IMR-90 (cell line): ENCODE measurements at regions of chr6 and their contacts with region 1.

Region 1: GRCh38 chr6:126657561-126658175 is 317.8 kb downstream of the CENPW start:
- DNase-seq: peak; percentile 44
- ATAC-seq: peak; percentile 62; the same call in 1 of the 2 replicates
- H3K4me3 ChIP-seq: no peak overlapping the region
- H3K27ac ChIP-seq: no peak overlapping the region
- H3K4me1 ChIP-seq: no peaks in the 10 kb centered on the region; the same call in 1 of the 2 replicates
- H3K27me3 ChIP-seq: no peaks in the 10 kb centered on the region
- CTCF ChIP-seq: peak; percentile 47
- POLR2A ChIP-seq: no peak
- RAD21 ChIP-seq: peak; percentile 51

Region 2: DNA sequence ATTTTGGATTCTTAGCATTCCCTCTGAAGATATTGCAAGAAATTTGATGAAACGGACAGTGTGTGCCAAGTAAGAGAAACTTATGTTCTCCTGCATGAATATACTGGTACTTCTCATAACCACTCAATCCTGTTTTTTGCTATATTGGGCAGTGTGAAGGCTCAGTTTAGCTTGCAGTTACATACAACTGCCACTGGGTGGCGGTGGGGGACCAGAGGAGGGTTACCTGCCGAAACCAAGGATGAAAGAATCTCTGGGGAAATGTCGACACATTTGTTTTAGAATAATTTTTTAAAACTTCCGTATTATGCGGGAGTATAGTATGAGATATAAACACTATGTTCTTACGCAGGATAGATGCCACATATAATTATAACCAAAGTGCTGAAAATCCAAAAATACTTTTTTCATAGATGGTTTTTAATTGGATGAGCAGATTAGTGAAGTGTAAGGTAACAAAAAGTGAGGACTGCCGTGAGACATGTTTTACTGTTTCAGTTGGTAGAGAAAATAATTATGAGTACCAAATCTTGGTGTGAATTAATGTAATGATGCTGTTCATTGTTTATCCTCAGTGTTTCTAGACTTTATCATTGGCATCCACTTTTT is 661.6 kb before region 1 on chr6:
- CTCF ChIA-PET with region 1: no interaction called
- POLR2A ChIA-PET with region 1: no interaction called
- dilution Hi-C with region 1: no loop called
- in situ Hi-C with region 1: loop called (anchors 25 kb)
- intact Hi-C with region 1: loop called (anchors 2 kb)
- DNase-seq: peak; percentile 60
- ATAC-seq: peak; percentile 98
- H3K4me3 ChIP-seq: no peak overlapping the region
- H3K27ac ChIP-seq: no peak overlapping the region
- H3K4me1 ChIP-seq: no peaks in the 10 kb centered on the region
- H3K27me3 ChIP-seq: no peaks in the 10 kb centered on the region
- CTCF ChIP-seq: peak; percentile 94
- POLR2A ChIP-seq: no peak
- RAD21 ChIP-seq: peak; percentile 91

Region 3: DNA sequence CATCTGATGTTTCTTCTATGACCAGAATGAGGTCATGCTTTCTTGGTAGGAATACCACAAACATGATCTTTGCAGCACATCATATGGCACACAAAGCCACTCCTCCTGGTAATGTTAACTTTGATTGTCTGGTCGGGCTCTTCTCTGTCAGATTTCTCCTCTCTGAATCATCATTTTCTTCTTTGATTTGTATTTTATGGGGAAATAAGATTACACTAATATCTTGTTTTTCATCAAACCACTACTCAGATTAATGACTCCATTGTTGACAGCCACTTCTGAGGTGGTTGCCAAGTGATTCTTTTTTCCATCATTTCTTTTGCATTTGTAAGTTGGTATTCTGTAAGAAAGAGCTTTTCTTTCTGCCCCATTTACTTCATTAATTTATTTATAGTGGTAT is 641.8 kb before region 1 on chr6:
- CTCF ChIA-PET with region 1: no interaction called
- POLR2A ChIA-PET with region 1: no interaction called
- dilution Hi-C with region 1: no loop called
- in situ Hi-C with region 1: loop called (anchors 25 kb)
- intact Hi-C with region 1: no loop called
- DNase-seq: peak; percentile 16
- ATAC-seq: no peak
- H3K4me3 ChIP-seq: no peak overlapping the region
- H3K27ac ChIP-seq: no peak overlapping the region
- H3K4me1 ChIP-seq: no peaks in the 10 kb centered on the region; the same call in 1 of the 2 replicates
- H3K27me3 ChIP-seq: no peaks in the 10 kb centered on the region
- CTCF ChIP-seq: no peak
- POLR2A ChIP-seq: no peak
- RAD21 ChIP-seq: no peak

Region 4: GRCh38 chr6:126033696-126034095 is 624.0 kb before region 1 on chr6:
- CTCF ChIA-PET with region 1: no interaction called
- POLR2A ChIA-PET with region 1: no interaction called
- dilution Hi-C with region 1: no loop called
- in situ Hi-C with region 1: no loop called
- intact Hi-C with region 1: loop called (anchors 1 kb)
- DNase-seq: peak; percentile 91
- ATAC-seq: peak; percentile 96
- H3K4me3 ChIP-seq: no peak overlapping the region
- H3K27ac ChIP-seq: no peak overlapping the region
- H3K4me1 ChIP-seq: no peaks in the 10 kb centered on the region; the same call in 1 of the 2 replicates
- H3K27me3 ChIP-seq: no peaks in the 10 kb centered on the region
- CTCF ChIP-seq: peak; percentile 81
- POLR2A ChIP-seq: no peak
- RAD21 ChIP-seq: peak; percentile 80

Region 5: DNA sequence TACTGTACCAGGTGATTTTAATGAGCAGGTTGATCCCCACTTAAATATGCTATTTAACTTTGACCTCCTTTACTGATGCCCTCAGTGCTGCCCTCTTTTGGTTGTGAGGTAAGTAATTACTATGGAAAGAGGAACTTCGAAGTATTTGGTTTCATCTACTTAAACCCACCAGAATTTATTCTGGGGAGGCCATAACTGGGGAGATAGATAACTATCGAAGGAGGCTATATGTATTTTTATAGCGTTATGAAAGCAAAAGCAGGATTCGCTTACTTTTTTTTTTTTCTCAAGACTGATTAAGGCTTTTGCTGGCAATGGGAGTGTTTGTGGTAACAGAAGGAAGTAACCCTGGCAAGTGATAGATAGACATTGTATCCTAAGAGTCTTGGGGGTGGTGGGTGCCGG is 486.7 kb before region 1 on chr6:
- CTCF ChIA-PET with region 1: no interaction called
- POLR2A ChIA-PET with region 1: no interaction called
- dilution Hi-C with region 1: no loop called
- in situ Hi-C with region 1: no loop called
- intact Hi-C with region 1: loop called (anchors 5 kb)
- DNase-seq: peak; percentile 26
- ATAC-seq: 0 out of 2 replicates have a peak, but pooled peaks have one; percentile 35
- H3K4me3 ChIP-seq: no peak overlapping the region
- H3K27ac ChIP-seq: no peak overlapping the region
- H3K4me1 ChIP-seq: no peaks in the 10 kb centered on the region
- H3K27me3 ChIP-seq: peaks cover 12% of the 10 kb centered on the region
- CTCF ChIP-seq: peak; percentile 49
- POLR2A ChIP-seq: no peak
- RAD21 ChIP-seq: peak; percentile 38

Region 6: DNA sequence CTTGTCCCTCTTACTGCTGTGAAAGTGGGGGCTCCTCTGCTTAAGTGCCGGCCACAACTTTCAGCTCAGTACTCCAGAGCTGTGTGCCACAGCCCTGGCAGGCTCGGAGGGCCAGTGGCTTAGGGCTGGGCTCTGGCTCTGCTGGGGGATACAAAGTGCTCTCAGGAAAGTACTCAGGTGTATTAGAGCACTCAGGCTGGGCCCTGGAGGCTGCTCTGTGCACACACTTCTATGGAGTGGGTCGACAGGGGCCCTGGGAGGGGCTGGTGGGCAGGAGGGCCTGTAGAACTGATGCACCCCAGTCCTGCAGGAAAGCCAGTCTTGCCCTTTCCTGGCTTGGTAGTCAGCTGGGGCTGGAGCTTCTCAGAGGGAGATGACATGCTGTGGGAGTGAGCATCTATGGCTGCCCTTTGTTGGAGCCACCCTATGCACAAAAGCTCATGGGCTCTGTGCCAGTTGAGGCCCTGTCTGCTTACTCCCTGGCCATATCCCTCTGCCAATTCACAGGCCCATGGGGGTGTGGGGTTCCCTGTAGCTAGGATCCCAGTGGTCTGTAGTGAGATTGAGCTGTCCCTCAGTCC is 295.7 kb before region 1 on chr6:
- CTCF ChIA-PET with region 1: interaction called, 3 read pairs
- POLR2A ChIA-PET with region 1: no interaction called
- dilution Hi-C with region 1: no loop called
- in situ Hi-C with region 1: no loop called
- intact Hi-C with region 1: loop called (anchors 2 kb)
- DNase-seq: no peak
- ATAC-seq: no peak
- H3K4me3 ChIP-seq: no peak overlapping the region
- H3K27ac ChIP-seq: no peak overlapping the region
- H3K4me1 ChIP-seq: no peaks in the 10 kb centered on the region
- H3K27me3 ChIP-seq: no peaks in the 10 kb centered on the region
- CTCF ChIP-seq: no peak
- POLR2A ChIP-seq: no peak
- RAD21 ChIP-seq: no peak

Region 7: GRCh38 chr6:127100510-127101140 is 443.0 kb after region 1 on chr6:
- CTCF ChIA-PET with region 1: no interaction called
- POLR2A ChIA-PET with region 1: no interaction called
- dilution Hi-C with region 1: no loop called
- in situ Hi-C with region 1: no loop called
- intact Hi-C with region 1: loop called (anchors 5 kb)
- DNase-seq: peak; percentile 41
- ATAC-seq: peak; percentile 56; the same call in 1 of the 2 replicates
- H3K4me3 ChIP-seq: no peak overlapping the region
- H3K27ac ChIP-seq: no peak overlapping the region
- H3K4me1 ChIP-seq: 0 out of 2 replicates have a peak, but pooled peaks cover 4% of the 10 kb centered on the region
- H3K27me3 ChIP-seq: peaks cover 15% of the 10 kb centered on the region
- CTCF ChIP-seq: peak; percentile 43
- POLR2A ChIP-seq: no peak
- RAD21 ChIP-seq: peak; percentile 35